Right cardiac atrium (tissue), 5 donors: ENCODE measurements at regions of chr17 and their contacts with region 1.

Region 1: DNA sequence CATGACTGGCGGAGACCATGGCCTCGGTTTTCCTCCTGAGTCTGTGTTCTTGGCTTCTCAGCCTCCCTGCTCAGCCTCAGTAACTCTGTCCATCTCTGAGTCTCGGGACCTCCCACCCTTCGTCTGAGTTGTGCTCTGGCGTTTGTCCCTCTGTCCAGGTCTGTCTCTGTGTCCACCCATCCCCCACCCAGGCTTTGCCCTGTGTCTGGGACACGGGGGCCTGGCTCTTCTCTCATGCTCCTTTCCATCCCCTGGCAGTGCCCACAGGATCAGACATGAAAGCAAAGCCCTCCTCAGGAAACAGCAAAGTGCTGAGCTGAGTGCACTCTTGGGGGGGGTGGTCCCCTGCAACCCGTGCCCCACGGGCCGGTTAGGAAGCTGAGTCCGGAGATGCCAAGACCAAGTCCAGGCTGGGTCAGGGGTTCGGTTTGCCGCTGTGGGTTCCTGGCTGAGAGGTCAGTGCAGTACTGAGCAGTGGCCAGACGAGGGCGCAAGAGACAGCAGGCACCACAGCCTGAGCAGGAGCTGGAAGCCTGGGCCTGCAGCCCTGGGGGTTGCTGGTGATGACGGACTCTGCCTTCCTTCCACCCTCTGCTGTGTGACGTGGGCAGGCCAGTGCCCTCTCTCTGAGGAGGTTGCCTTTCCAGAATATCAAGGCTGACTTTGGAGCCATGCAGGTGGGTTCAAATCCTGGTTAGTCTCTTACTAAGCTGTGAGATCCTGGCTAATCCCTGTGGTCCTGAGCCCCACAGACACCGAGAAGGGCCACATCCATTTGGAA is 2.5 kb downstream of the P2RX1 start:
- DNase-seq: peak; percentile 80 to 93 (median 92)
- ATAC-seq: peak; percentile 63 to 65
- H3K4me3 ChIP-seq: no peak overlapping the region
- H3K27ac ChIP-seq: no peak overlapping the region
- H3K4me1 ChIP-seq: peaks cover 14% of the 10 kb centered on the region
- H3K27me3 ChIP-seq: no peaks in the 10 kb centered on the region

Region 2: GRCh38 chr17:3738562-3739295 is 175.0 kb before region 1 on chr17:
- intact Hi-C with region 1: loop called in 1 of 4 experiments (anchors 10 kb)
- DNase-seq: peak in 2 of 3 donors; percentile 57 to 64
- ATAC-seq: peak; percentile 58 to 66
- H3K4me3 ChIP-seq: no peak overlapping the region
- H3K27ac ChIP-seq: no peak overlapping the region
- H3K4me1 ChIP-seq: no peaks in the 10 kb centered on the region
- H3K27me3 ChIP-seq: no peaks in the 10 kb centered on the region

Region 3: GRCh38 chr17:3865176-3865575 is 48.5 kb before region 1 on chr17:
- intact Hi-C with region 1: loop called in 3 of 4 experiments (anchors 5 kb)
- DNase-seq: peak; percentile 71 to 78 (median 71)
- ATAC-seq: peak; percentile 61 to 68
- H3K4me3 ChIP-seq: no peak overlapping the region
- H3K27ac ChIP-seq: no peak overlapping the region
- H3K4me1 ChIP-seq: no peaks in the 10 kb centered on the region
- H3K27me3 ChIP-seq: no peaks in the 10 kb centered on the region

Region 4: DNA sequence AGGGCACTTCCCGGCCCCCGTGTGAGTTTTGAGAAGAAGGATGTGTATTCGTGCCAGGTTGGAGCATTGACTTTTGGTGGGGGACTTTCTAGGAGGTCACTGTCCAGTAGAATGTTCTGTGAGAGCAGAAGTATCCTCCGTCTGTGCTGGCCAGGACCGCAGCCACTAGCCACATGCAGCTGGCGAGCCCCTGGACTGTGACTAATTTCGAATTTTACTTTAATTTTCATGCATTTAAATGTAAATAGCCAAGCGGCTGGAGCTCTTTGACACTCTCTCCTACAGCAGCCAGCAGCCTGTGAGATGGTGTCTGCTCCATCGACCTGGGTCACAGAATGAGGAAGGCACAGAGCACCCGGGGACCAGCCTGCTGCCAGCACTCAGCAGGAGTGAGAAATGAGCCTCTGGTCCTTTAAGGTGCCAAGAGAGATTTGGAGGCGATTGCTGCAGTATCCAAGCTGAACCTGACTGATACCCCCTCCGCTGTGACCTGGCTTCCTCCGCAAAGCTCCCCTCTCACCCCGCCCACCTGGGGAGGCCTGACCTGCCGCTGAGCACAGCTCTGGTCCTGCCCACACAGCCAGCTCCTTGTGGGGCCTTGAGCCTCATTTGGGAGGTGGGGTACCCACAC is 42.7 kb after region 1 on chr17:
- intact Hi-C with region 1: no loop called
- DNase-seq: peak in 1 of 3 donors; percentile 26
- ATAC-seq: no peak
- H3K4me3 ChIP-seq: no peak overlapping the region
- H3K27ac ChIP-seq: no peak overlapping the region
- H3K4me1 ChIP-seq: no peaks in the 10 kb centered on the region
- H3K27me3 ChIP-seq: no peaks in the 10 kb centered on the region